Activated CD4-positive, alpha-beta T cell treated with anti-CD3 and anti-CD28 coated beads, Interleukin-2, amount 10 ng/mL, durations not matched to agents 7 days and 5 days (primary cell): ENCODE measurements at regions of chr12 and their contacts with region 1.

Region 1: DNA sequence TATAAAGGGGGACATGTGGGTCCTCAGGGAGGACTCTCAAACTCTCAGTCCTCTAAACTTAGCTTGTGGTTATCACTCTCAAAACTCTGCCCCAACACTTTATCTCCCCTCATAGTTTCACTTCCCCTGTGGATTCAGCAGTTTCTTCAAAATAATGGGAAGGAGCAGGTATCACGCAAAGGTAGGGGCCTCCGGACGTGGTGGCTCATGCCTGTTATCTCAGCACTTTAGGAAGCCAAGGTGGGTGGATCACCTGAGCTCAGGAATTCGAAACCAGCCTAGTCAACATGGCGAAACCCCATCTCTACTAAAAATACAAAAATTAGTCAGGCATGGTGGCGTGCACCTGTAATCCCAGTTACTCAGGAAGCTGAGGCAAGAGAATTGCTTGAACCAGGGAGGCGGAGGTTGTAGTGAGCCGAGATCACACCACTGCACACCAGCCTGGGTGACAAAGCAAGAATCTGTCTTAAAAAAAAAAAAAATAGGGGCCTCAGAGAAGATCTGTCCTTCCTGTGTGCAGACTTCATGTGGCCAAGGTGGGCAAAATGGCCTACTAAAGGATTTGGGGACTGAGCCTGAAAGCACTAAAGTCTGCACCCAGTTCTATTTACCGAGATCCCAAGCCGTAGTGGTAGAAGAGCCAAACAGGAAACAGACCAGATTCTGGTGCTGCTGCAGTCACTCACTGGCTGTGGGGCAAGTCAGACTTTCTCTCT is 6.4 kb downstream of the ITGB7 start:
- DNase-seq: peak; percentile 51
- H3K4me3 Mint-ChIP-seq: peak overlapping the region; percentile 70
- H3K27ac Mint-ChIP-seq: peak overlapping the region; percentile 90
- H3K4me1 Mint-ChIP-seq: peaks cover 82% of the 10 kb centered on the region
- H3K27me3 Mint-ChIP-seq: no peaks in the 10 kb centered on the region

Region 2: GRCh38 chr12:53170876-53171724 is 29.5 kb before region 1 on chr12:
- CTCF ChIA-PET with region 1: no interaction called
- POLR2A ChIA-PET with region 1: no interaction called
- DNase-seq: no peak
- H3K4me3 Mint-ChIP-seq: no peak overlapping the region
- H3K27ac Mint-ChIP-seq: peak overlapping the region; percentile 52
- H3K4me1 Mint-ChIP-seq: peaks cover 11% of the 10 kb centered on the region
- H3K27me3 Mint-ChIP-seq: no peaks in the 10 kb centered on the region

Region 3: DNA sequence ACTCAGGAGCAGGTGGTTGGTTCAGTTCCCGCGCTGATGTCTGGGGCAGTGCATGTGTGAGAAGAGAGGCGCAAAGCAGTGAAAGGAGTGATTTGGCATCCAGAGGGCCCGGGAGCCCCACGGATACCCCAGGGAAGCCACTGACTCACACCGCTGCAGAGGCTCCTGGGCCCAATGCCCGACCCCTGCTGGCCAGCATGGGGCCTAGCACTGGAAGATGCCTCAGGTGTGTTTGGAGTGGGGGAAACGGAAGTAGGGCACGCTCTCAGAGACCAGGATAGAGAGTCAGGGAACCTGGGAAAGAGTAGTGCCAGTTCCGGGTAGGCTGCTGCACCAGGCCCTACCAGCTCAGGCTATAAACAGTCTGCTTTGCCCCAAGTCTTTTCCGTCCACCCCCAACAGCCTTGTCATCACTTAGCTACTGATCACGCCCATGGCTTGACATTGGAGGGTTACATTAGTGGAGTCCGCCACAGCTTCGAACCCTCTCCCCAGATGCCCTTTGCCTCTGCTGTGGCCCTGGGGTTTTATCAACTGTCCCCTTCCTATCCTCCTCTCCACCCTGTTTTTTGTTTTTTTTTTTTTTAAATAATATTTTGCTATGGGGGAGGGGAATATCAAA is 10.4 kb before region 1 on chr12:
- CTCF ChIA-PET with region 1: interaction called, 10 read pairs
- POLR2A ChIA-PET with region 1: no interaction called
- DNase-seq: peak; percentile 44
- H3K4me3 Mint-ChIP-seq: no peak overlapping the region
- H3K27ac Mint-ChIP-seq: no peak overlapping the region
- H3K4me1 Mint-ChIP-seq: peaks cover 30% of the 10 kb centered on the region
- H3K27me3 Mint-ChIP-seq: no peaks in the 10 kb centered on the region

Region 4: DNA sequence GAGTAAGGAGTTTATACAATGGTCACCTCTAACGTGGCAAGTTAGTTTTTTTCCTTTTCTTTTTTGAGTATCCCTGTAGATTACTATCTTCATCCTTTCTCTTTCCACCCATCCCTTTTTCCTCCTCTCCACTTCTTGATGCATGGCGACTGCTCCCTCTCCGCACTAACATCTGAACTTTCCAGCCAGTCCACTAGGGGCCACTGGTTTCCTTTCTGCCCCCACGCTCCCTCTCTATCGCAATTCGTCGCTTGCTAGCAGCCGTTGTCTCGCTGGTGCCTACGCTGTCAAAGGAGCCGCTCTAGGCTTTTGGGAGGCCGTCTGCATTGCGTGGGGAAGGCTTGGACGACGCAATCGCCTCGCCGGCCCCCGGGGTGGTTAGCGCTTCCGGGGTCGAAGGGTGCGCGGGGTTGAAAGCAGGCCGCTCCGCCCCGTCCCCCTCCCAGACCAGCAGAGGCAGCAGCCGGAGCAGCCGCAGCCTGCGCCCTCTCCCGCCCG is 251.1 kb after region 1 on chr12 and contains the start of gene PCBP2:
- CTCF ChIA-PET with region 1: no interaction called
- POLR2A ChIA-PET with region 1: no interaction called
- DNase-seq: peak; percentile 98
- H3K4me3 Mint-ChIP-seq: peak within 1 kb of the TSS; percentile 100
- H3K27ac Mint-ChIP-seq: peak within 1 kb of the TSS; percentile 100
- H3K4me1 Mint-ChIP-seq: peaks cover 37% of the 10 kb centered on the region
- H3K27me3 Mint-ChIP-seq: no peaks in the 10 kb centered on the region
- total RNA-seq, gene PCBP2: 882 to 943 TPM